ENCODE measurements at regions of chr6 and their contacts with region 1.

Region 1: GRCh38 chr6:39361657-39362486 is 39.4 kb upstream of the KCNK16 start:
- DNase-seq: peak in 3 of 4 donors; percentile 58 to 81 (median 75)
- ATAC-seq: peak; percentile 93
- H3K4me3 ChIP-seq: no peak overlapping the region
- H3K27ac ChIP-seq: no peak overlapping the region
- H3K4me1 ChIP-seq: peaks cover 0 to 5% of the 10 kb centered on the region in 2 donors
- H3K27me3 ChIP-seq: no peaks in the 10 kb centered on the region
- CTCF ChIP-seq: peak; percentile 69 to 73

Region 2: GRCh38 chr6:39239527-39240154 is 122.2 kb before region 1 on chr6:
- intact Hi-C with region 1: no loop called
- DNase-seq: no peak
- ATAC-seq: no peak
- H3K4me3 ChIP-seq: no peak overlapping the region
- H3K27ac ChIP-seq: no peak overlapping the region
- H3K4me1 ChIP-seq: no peaks in the 10 kb centered on the region
- H3K27me3 ChIP-seq: no peaks in the 10 kb centered on the region
- CTCF ChIP-seq: no peak

Region 3: GRCh38 chr6:39568896-39569295 is 207.0 kb after region 1 on chr6:
- intact Hi-C with region 1: no loop called
- DNase-seq: no peak
- ATAC-seq: no peak
- H3K4me3 ChIP-seq: no peak overlapping the region
- H3K27ac ChIP-seq: no peak overlapping the region
- H3K4me1 ChIP-seq: no peaks in the 10 kb centered on the region
- H3K27me3 ChIP-seq: no peaks in the 10 kb centered on the region
- CTCF ChIP-seq: no peak

Region 4: DNA sequence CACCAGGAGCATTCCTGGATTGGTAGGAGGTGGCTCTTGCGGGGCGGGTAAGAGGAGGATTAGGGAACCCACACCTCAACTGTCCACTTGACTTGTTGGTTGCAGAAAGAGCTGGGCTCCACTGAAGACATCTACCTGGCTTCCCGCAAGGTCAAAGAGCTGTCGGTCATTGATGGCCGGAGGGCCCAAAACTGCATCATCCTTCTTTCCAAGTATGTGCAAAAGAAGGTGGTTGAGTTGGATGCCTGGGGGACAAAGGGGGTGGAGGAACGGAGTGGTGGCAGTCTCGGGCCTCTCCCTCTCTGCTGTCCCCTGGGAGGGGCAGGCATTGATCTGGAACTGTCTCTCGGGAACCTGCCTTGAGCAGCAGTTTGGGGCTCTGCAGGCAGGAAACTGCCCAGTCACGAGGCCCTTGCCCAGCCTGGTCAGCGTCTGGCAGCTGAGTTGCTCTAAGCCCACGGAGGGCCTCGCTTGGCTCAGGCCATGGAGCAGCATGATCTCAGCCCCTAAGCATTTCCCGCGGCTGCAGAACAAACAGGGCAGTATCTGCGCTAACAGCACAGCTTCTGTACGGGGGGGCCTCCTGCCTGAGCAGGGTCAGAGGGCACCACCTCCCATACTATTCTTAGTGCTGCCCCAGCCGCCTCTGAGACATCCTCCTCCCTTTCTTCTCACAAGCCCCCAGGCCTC is 525.7 kb after region 1 on chr6:
- intact Hi-C with region 1: loop called in 1 of 2 experiments (anchors 10 kb)
- DNase-seq: peak in 3 of 4 donors; percentile 47 to 83 (median 64)
- ATAC-seq: peak; percentile 84
- H3K4me3 ChIP-seq: no peak overlapping the region
- H3K27ac ChIP-seq: peak overlapping the region; percentile 45 to 60
- H3K4me1 ChIP-seq: peaks cover 7 to 12% of the 10 kb centered on the region in 2 donors
- H3K27me3 ChIP-seq: no peaks in the 10 kb centered on the region
- CTCF ChIP-seq: no peak

Measured in left lung (tissue), 14 donors.